Activated naive CD4-positive, alpha-beta T cell treated with anti-CD3 and anti-CD28 coated beads, Interleukin-2, amount 10 ng/mL, durations not matched to agents 7 days and 5 days (primary cell): ENCODE measurements at regions of chr16 and their contacts with region 1.

Region 1: GRCh38 chr16:84511180-84511824 is 6.8 kb upstream of the MEAK7 start:
- DNase-seq: peak; percentile 80
- H3K4me3 Mint-ChIP-seq: no peak overlapping the region
- H3K27ac Mint-ChIP-seq: peak overlapping the region; percentile 87
- H3K4me1 Mint-ChIP-seq: peaks cover 92% of the 10 kb centered on the region
- H3K27me3 Mint-ChIP-seq: peaks cover 7% of the 10 kb centered on the region

Region 2: GRCh38 chr16:84553873-84554399 is 42.6 kb after region 1 on chr16:
- CTCF ChIA-PET with region 1: interaction called, 26 read pairs
- DNase-seq: peak; percentile 80
- H3K4me3 Mint-ChIP-seq: peak overlapping the region; percentile 93
- H3K27ac Mint-ChIP-seq: peak overlapping the region; percentile 91
- H3K4me1 Mint-ChIP-seq: peaks cover 55% of the 10 kb centered on the region
- H3K27me3 Mint-ChIP-seq: no peaks in the 10 kb centered on the region